B cell (primary cell): ENCODE measurements at regions of chr19 and their contacts with region 1.

Region 1: GRCh38 chr19:1680976-1681375 is 28.6 kb upstream of the TCF3 start:
- DNase-seq: no peak
- ATAC-seq: no peak
- H3K4me3 ChIP-seq: no peak overlapping the region
- H3K4me3 Mint-ChIP-seq: no peak overlapping the region
- H3K27ac ChIP-seq: no peak overlapping the region
- H3K27ac Mint-ChIP-seq: no peak overlapping the region
- H3K4me1 ChIP-seq: peaks cover 0 to 1% of the 10 kb centered on the region in 2 donors
- H3K4me1 Mint-ChIP-seq: no peaks in the 10 kb centered on the region
- H3K27me3 ChIP-seq: peaks cover 0 to 54% (median 17%) of the 10 kb centered on the region in 4 experiments
- H3K27me3 Mint-ChIP-seq: peaks cover 41% of the 10 kb centered on the region
- CTCF ChIP-seq: no peak

Region 2: DNA sequence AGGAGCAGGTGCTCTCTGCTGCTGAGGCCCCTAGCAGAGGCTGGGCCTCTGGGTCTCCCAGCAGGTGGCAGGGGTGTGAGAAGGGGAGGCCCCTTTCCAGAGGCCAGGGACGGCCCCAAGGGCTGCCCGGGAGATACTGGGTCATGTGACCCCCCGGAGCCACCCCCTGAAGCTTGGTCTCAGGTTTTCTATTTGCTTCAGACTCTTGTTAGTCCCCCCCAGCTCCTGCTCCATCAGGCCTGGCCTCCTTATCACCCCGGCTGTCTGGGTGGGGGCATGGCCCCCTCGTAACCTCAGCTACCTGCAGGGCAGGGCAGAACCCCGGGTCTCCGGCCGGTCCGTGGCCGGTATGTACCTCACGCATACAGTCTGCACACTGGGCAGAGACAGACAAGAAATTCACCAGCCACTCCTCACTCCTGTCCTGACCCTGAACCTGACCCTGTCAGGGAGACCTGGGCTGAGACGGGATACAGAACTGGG is 15.4 kb before region 1 on chr19:
- CTCF ChIA-PET with region 1: no interaction called
- POLR2A ChIA-PET with region 1: interaction called, 12 read pairs
- intact Hi-C with region 1: no loop called
- DNase-seq: peak; percentile 45
- ATAC-seq: no peak
- H3K4me3 ChIP-seq: no peak overlapping the region
- H3K4me3 Mint-ChIP-seq: peak overlapping the region; percentile 64
- H3K27ac ChIP-seq: peak overlapping the region; percentile 19 to 52
- H3K27ac Mint-ChIP-seq: peak overlapping the region; percentile 91
- H3K4me1 ChIP-seq: peaks cover 56 to 86% of the 10 kb centered on the region in 2 donors
- H3K4me1 Mint-ChIP-seq: peaks cover 54% of the 10 kb centered on the region
- H3K27me3 ChIP-seq: no peaks in the 10 kb centered on the region
- H3K27me3 Mint-ChIP-seq: no peaks in the 10 kb centered on the region
- CTCF ChIP-seq: no peak